GM12878 (cell line): ENCODE measurements at regions of chr19 and their contacts with region 1.

Region 1: DNA sequence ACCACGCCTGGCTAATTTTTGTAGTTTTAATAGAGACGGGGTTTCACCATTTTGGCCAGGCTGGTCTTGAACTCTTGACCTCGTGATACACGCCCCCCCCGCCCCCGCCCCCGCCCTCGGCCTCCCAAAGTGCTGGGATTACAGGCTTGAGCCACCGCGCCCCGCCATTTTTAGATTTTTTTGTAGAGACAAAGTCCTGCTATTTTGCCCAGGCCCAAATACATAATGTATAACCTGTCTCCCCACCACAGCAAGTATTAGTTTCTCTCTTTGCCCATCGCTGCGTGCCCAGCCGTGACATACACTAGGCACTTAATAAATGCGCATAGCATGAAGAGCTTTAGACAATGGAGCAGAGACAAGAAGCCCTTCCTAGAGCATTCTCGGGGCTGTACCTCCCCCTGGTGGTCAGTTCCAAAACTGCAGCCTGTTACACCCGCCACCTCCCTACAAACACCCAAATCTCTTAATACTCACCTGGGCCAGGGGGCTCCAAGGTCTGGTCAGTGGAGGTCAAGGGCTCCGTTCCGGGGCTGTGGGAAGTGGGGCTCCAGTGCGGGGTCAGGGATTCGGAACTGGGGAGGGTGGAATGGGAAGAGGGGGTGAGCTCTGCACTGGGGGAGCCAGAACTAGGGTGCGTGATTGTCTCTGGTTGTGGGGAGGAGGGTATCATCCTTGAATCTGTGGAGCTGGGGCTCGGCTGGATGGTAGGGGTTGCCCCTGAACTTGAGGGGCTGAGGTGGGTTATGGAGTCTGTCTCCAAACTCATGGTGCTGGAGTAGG is 22.5 kb downstream of the IQCN start:
- DNase-seq: peak; percentile 40
- ATAC-seq: peak; percentile 92
- H3K4me3 ChIP-seq: no peak overlapping the region
- H3K27ac ChIP-seq: no peak overlapping the region
- H3K4me1 ChIP-seq: peaks cover 5% of the 10 kb centered on the region
- H3K27me3 ChIP-seq: no peaks in the 10 kb centered on the region; a peak in 1 of 4 replicates
- CTCF ChIP-seq: peak; percentile 90 to 97 (median 96)
- EP300 ChIP-seq: no peak
- POLR2A ChIP-seq: no peak
- RAD21 ChIP-seq: peak; percentile 94

Region 2: GRCh38 chr19:18112989-18113478 is 138.7 kb before region 1 on chr19:
- CTCF ChIA-PET with region 1: interaction called, 15 read pairs
- POLR2A ChIA-PET with region 1: no interaction called
- RAD21 ChIA-PET with region 1: interaction called, 5 read pairs
- SMC1A ChIA-PET with region 1: no interaction called
- in situ Hi-C with region 1: no loop called
- intact Hi-C with region 1: loop called (anchors 1 kb)
- DNase-seq: no peak
- ATAC-seq: peak; percentile 76
- H3K4me3 ChIP-seq: no peak overlapping the region
- H3K27ac ChIP-seq: peak overlapping the region; percentile 48; the same call in 1 of the 2 replicates
- H3K4me1 ChIP-seq: peaks cover 29% of the 10 kb centered on the region
- H3K27me3 ChIP-seq: no peaks in the 10 kb centered on the region
- CTCF ChIP-seq: peak; percentile 88 to 93 (median 91)
- EP300 ChIP-seq: no peak
- POLR2A ChIP-seq: no peak
- RAD21 ChIP-seq: peak; percentile 84

Region 3: GRCh38 chr19:18141031-18141430 is 110.7 kb before region 1 on chr19:
- CTCF ChIA-PET with region 1: no interaction called
- POLR2A ChIA-PET with region 1: no interaction called
- RAD21 ChIA-PET with region 1: no interaction called
- SMC1A ChIA-PET with region 1: no interaction called
- in situ Hi-C with region 1: no loop called
- intact Hi-C with region 1: no loop called
- DNase-seq: no peak
- ATAC-seq: no peak
- H3K4me3 ChIP-seq: no peak overlapping the region
- H3K27ac ChIP-seq: no peak overlapping the region
- H3K4me1 ChIP-seq: no peaks in the 10 kb centered on the region
- H3K27me3 ChIP-seq: no peaks in the 10 kb centered on the region
- CTCF ChIP-seq: no peak
- EP300 ChIP-seq: no peak
- POLR2A ChIP-seq: no peak
- RAD21 ChIP-seq: no peak

Region 4: GRCh38 chr19:18192673-18193387 is 58.9 kb before region 1 on chr19 and contains the start of gene MPV17L2:
- CTCF ChIA-PET with region 1: interaction called, 22 read pairs
- POLR2A ChIA-PET with region 1: interaction called, 4 read pairs
- RAD21 ChIA-PET with region 1: interaction called, 36 read pairs
- SMC1A ChIA-PET with region 1: interaction called, 18 read pairs
- in situ Hi-C with region 1: no loop called
- intact Hi-C with region 1: no loop called
- DNase-seq: peak; percentile 100
- ATAC-seq: peak; percentile 94
- H3K4me3 ChIP-seq: peak within 1 kb of the TSS; percentile 79
- H3K27ac ChIP-seq: peak within 1 kb of the TSS; percentile 65
- H3K4me1 ChIP-seq: peaks cover 11% of the 10 kb centered on the region
- H3K27me3 ChIP-seq: no peaks in the 10 kb centered on the region
- CTCF ChIP-seq: no peak
- EP300 ChIP-seq: 0 out of 4 replicates have a peak, but pooled peaks of 1 of the 2 experiments have one; percentile 8
- POLR2A ChIP-seq: peak; percentile 72
- RAD21 ChIP-seq: no peak
- polyA plus RNA-seq, gene MPV17L2: 5.1 to 7.7 TPM

Region 5: DNA sequence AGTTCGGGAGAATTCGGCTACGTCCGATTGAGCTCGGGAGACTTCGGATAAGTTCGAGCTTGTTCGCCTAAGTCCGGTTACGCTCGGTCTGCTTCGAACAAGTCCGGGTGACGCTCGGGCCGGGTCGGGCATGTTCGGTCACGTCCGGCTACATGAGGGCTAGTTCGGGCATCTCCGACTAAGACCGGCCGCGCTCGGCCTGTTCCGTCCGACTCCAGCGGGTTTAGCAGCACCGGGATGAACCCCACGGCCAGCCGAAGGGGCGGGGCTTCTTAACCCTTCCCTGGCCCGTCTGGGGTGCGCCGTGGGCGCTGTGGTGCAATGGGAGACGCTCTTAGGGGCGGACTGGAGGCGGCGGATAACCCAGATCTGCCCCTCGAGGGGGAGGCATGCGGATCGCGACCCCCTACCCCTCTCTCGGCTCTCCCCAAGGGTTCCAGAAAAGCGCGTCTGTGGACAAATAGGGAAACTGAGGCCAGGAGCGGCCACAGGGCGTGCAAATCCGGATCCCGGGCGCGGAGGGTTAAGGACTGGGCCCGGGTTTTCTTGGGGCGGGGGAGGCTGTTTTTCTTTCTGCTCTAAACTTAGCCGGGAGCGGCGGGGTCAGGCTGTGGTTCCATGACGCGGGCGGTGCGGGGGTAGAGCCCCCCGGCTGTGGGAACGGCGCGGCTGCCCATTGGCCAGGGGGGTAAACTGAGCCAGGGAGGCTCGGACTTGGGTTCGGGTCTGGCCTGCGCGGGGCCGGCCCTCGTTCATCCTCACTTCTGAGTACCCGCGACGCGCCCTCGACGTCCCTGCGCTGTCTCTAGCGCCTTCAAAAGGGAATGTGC is 27.0 kb before region 1 on chr19:
- CTCF ChIA-PET with region 1: interaction called, 15 read pairs
- POLR2A ChIA-PET with region 1: interaction called, 4 read pairs
- RAD21 ChIA-PET with region 1: interaction called, 17 read pairs
- SMC1A ChIA-PET with region 1: interaction called, 7 read pairs
- in situ Hi-C with region 1: no loop called
- intact Hi-C with region 1: no loop called
- DNase-seq: peak; percentile 80
- ATAC-seq: peak; percentile 99
- H3K4me3 ChIP-seq: peak overlapping the region; percentile 18; the same call in 1 of the 2 replicates
- H3K27ac ChIP-seq: no peak overlapping the region
- H3K4me1 ChIP-seq: peaks cover 19% of the 10 kb centered on the region
- H3K27me3 ChIP-seq: peaks cover 0 to 7% of the 10 kb centered on the region in 2 experiments; a peak in 3 of 4 replicates
- CTCF ChIP-seq: no peak
- EP300 ChIP-seq: no peak
- POLR2A ChIP-seq: no peak
- RAD21 ChIP-seq: no peak

Region 6: GRCh38 chr19:18239303-18239702 is 12.5 kb before region 1 on chr19:
- CTCF ChIA-PET with region 1: interaction called, 13 read pairs
- POLR2A ChIA-PET with region 1: no interaction called
- RAD21 ChIA-PET with region 1: no interaction called
- SMC1A ChIA-PET with region 1: interaction called, 3 read pairs
- in situ Hi-C with region 1: no loop called
- intact Hi-C with region 1: no loop called
- DNase-seq: no peak
- ATAC-seq: no peak
- H3K4me3 ChIP-seq: no peak overlapping the region
- H3K27ac ChIP-seq: no peak overlapping the region
- H3K4me1 ChIP-seq: no peaks in the 10 kb centered on the region
- H3K27me3 ChIP-seq: no peaks in the 10 kb centered on the region; a peak in 2 of 4 replicates
- CTCF ChIP-seq: no peak
- EP300 ChIP-seq: no peak
- POLR2A ChIP-seq: no peak
- RAD21 ChIP-seq: no peak

Region 7: GRCh38 chr19:18269070-18269723 is 17.4 kb after region 1 on chr19:
- CTCF ChIA-PET with region 1: interaction called, 12 read pairs
- POLR2A ChIA-PET with region 1: no interaction called
- RAD21 ChIA-PET with region 1: interaction called, 4 read pairs
- SMC1A ChIA-PET with region 1: interaction called, 3 read pairs
- in situ Hi-C with region 1: no loop called
- intact Hi-C with region 1: no loop called
- DNase-seq: no peak
- ATAC-seq: no peak
- H3K4me3 ChIP-seq: no peak overlapping the region
- H3K27ac ChIP-seq: no peak overlapping the region
- H3K4me1 ChIP-seq: no peaks in the 10 kb centered on the region
- H3K27me3 ChIP-seq: no peaks in the 10 kb centered on the region
- CTCF ChIP-seq: no peak
- EP300 ChIP-seq: no peak
- POLR2A ChIP-seq: no peak
- RAD21 ChIP-seq: no peak

Region 8: GRCh38 chr19:18401580-18402112 is 149.9 kb after region 1 on chr19:
- CTCF ChIA-PET with region 1: no interaction called
- POLR2A ChIA-PET with region 1: no interaction called
- RAD21 ChIA-PET with region 1: no interaction called
- SMC1A ChIA-PET with region 1: no interaction called
- in situ Hi-C with region 1: no loop called
- intact Hi-C with region 1: no loop called
- DNase-seq: no peak
- ATAC-seq: peak; percentile 83
- H3K4me3 ChIP-seq: no peak overlapping the region
- H3K27ac ChIP-seq: peak overlapping the region; percentile 33
- H3K4me1 ChIP-seq: peaks cover 23% of the 10 kb centered on the region
- H3K27me3 ChIP-seq: no peaks in the 10 kb centered on the region
- CTCF ChIP-seq: peak; percentile 41 to 50 (median 41); a peak in 4 of 6 replicates
- EP300 ChIP-seq: no peak; a peak in 1 of 4 replicates
- POLR2A ChIP-seq: peak; percentile 51; the same call in 1 of the 2 replicates
- RAD21 ChIP-seq: peak; percentile 46

Region 9: DNA sequence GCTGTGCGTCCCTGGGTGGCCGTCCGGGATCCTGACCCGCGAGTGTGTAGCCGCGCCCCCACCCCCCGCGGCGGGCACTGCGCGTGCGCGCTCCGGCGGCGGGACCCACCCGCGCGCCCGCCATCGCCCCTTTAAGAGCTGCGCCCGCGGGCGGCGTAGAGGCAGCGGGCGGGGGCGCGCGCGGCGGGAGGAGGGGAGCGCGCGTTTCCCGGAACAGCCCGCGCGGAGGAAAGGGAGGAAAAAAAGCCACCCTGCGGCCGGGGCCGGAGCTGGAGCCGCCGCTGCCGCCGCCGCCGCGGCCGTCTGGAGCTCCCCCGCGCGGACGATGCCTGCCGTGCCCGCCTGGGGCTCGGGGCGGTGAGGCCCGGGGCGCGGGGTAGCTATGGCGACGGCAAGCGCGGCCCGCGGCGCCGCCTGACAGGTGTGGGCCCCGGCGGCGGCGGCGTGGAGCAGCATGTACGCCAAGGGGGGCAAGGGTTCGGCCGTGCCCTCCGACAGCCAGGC is 167.5 kb after region 1 on chr19 and contains the start of gene SSBP4:
- CTCF ChIA-PET with region 1: interaction called, 32 read pairs
- POLR2A ChIA-PET with region 1: no interaction called
- RAD21 ChIA-PET with region 1: no interaction called
- SMC1A ChIA-PET with region 1: no interaction called
- in situ Hi-C with region 1: no loop called
- intact Hi-C with region 1: no loop called
- DNase-seq: no peak
- ATAC-seq: peak; percentile 37
- H3K4me3 ChIP-seq: peak within 1 kb of the TSS; percentile 87
- H3K27ac ChIP-seq: peak within 1 kb of the TSS; percentile 72
- H3K4me1 ChIP-seq: peaks cover 70% of the 10 kb centered on the region
- H3K27me3 ChIP-seq: no peaks in the 10 kb centered on the region
- CTCF ChIP-seq: peak in 2 of 3 experiments; percentile 14 to 34; a peak in 2 of 6 replicates
- EP300 ChIP-seq: peak in 1 of 2 experiments; percentile 36; a peak in 1 of 4 replicates
- POLR2A ChIP-seq: no peak
- RAD21 ChIP-seq: no peak
- polyA plus RNA-seq, gene SSBP4: 0.37 to 6.6 TPM